ENCODE measurements at regions of chr6 and their contacts with region 1.

Region 1: DNA sequence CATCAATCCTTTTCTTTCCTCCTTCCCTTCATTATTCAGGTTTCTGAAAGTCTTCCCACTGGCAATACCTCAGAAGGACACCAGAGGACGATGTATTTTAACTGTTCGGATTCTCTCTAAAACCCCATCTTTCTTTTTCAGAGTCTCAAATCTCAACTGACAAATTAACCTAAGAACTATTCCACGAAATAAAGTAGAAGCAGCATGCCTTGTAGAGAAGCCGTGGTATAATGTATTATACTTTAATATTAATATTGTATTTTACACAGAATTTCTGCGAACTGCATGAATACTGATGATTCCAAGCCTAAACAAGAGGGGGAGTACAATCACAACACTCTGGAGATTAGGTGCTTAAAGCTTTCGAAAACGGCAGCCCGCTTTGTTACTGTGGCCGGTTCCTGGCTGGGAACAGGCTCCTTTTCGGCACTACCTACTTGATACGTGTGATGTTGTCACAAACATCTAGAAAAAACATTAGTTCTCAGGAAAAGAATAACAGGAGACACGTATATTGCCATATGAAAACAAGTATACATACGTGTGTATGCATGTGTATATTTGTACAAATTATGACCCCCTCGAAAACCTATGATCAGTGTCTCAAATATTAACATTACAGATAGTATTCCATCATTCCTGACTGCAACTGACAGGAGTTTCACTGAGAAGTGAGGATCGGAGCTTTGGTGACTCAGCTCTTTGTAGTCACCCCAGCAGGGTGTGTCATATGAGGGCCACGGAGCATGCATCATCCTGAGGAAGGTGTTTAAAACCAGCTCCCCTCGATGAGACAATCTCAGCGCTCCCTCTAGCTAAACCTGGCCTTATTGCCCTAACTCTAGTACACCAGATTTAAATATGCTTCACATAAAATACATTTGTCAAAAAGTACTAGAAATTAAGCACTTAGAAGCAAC is 319.7 kb upstream of the TCF21 start:
- DNase-seq: peak; percentile 92 to 96
- ATAC-seq: peak; percentile 98 to 100
- H3K4me3 ChIP-seq: peak overlapping the region; percentile 43
- H3K27ac ChIP-seq: peak overlapping the region; percentile 93 to 98
- H3K4me1 ChIP-seq: peaks cover 30% of the 10 kb centered on the region
- CTCF ChIP-seq: peak; percentile 90
- EP300 ChIP-seq: peak; percentile 58 to 69; a peak in 3 of 5 replicates
- POLR2A ChIP-seq: no peak
- RAD21 ChIP-seq: peak; percentile 85 to 89

Region 2: DNA sequence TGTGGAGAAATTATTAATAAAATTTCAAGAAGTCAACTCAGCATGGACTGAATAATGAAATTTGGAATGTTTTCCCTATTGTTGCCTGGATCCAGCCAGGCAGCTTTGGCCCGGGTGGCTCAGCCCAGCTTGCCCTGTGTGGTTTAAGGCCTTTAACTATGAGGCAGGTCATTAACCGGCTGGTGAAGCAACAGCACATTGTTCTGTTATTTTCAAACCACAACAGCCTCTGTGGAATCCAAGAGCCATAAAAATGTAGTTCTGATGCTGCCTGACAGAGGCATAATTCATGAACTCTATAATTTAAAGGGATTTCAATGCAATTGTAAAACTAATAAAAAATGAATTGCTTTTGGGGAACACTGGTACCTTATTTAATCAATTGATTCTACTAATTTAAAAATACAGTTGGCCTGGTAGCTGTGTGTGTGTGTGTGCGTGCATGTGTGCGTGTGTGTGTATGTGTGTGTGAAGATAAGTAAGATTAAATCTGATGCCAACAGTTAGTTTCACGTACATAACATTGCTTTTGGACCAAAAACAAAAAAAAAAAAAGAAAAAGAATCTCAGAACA is 637.2 kb before region 1 on chr6:
- CTCF ChIA-PET with region 1: no interaction called
- POLR2A ChIA-PET with region 1: no interaction called
- DNase-seq: no peak
- ATAC-seq: no peak
- H3K4me3 ChIP-seq: no peak overlapping the region
- H3K27ac ChIP-seq: no peak overlapping the region
- H3K4me1 ChIP-seq: no peaks in the 10 kb centered on the region
- CTCF ChIP-seq: no peak
- EP300 ChIP-seq: no peak
- POLR2A ChIP-seq: no peak
- RAD21 ChIP-seq: no peak

Region 3: GRCh38 chr6:133551847-133552341 is 17.3 kb before region 1 on chr6:
- CTCF ChIA-PET with region 1: interaction called, 10 read pairs
- POLR2A ChIA-PET with region 1: no interaction called
- DNase-seq: peak; percentile 16 to 74
- ATAC-seq: peak; percentile 84 to 86
- H3K4me3 ChIP-seq: no peak overlapping the region
- H3K27ac ChIP-seq: peak overlapping the region; percentile 70 to 75
- H3K4me1 ChIP-seq: peaks cover 53% of the 10 kb centered on the region
- CTCF ChIP-seq: no peak
- EP300 ChIP-seq: peak in 1 of 2 experiments; percentile 58; a peak in 2 of 5 replicates
- POLR2A ChIP-seq: no peak
- RAD21 ChIP-seq: no peak

Region 4: GRCh38 chr6:133609404-133610270 is 40.4 kb after region 1 on chr6:
- CTCF ChIA-PET with region 1: interaction called, 18 read pairs
- POLR2A ChIA-PET with region 1: no interaction called
- DNase-seq: peak; percentile 93 to 100
- ATAC-seq: peak; percentile 97 to 99
- H3K4me3 ChIP-seq: no peak overlapping the region
- H3K27ac ChIP-seq: peak overlapping the region; percentile 94 to 99
- H3K4me1 ChIP-seq: peaks cover 33% of the 10 kb centered on the region
- CTCF ChIP-seq: no peak
- EP300 ChIP-seq: peak; percentile 100
- POLR2A ChIP-seq: no peak
- RAD21 ChIP-seq: peak; percentile 33 to 80

Region 5: GRCh38 chr6:133837801-133838349 is 268.6 kb after region 1 on chr6:
- CTCF ChIA-PET with region 1: interaction called, 18 read pairs
- POLR2A ChIA-PET with region 1: interaction called, 8 read pairs
- DNase-seq: peak; percentile 28 to 81
- ATAC-seq: peak; percentile 96 to 97
- H3K4me3 ChIP-seq: peak overlapping the region; percentile 56
- H3K27ac ChIP-seq: peak overlapping the region; percentile 94 to 96
- H3K4me1 ChIP-seq: peaks cover 20% of the 10 kb centered on the region; the same call in 1 of the 3 replicates
- CTCF ChIP-seq: peak; percentile 89
- EP300 ChIP-seq: no peak
- POLR2A ChIP-seq: no peak
- RAD21 ChIP-seq: peak; percentile 58 to 74

Region 6: GRCh38 chr6:133916650-133917151 is 347.5 kb after region 1 on chr6:
- CTCF ChIA-PET with region 1: interaction called, 82 read pairs
- POLR2A ChIA-PET with region 1: interaction called, 12 read pairs
- DNase-seq: peak; percentile 35 to 93
- ATAC-seq: peak; percentile 90 to 93
- H3K4me3 ChIP-seq: no peak overlapping the region
- H3K27ac ChIP-seq: peak overlapping the region; percentile 88 to 91
- H3K4me1 ChIP-seq: peaks cover 23% of the 10 kb centered on the region
- CTCF ChIP-seq: peak; percentile 88
- EP300 ChIP-seq: no peak
- POLR2A ChIP-seq: no peak
- RAD21 ChIP-seq: peak; percentile 96

Measured in A549 (cell line).